ENCODE measurements at regions of chr10 and their contacts with region 1.

Region 1: DNA sequence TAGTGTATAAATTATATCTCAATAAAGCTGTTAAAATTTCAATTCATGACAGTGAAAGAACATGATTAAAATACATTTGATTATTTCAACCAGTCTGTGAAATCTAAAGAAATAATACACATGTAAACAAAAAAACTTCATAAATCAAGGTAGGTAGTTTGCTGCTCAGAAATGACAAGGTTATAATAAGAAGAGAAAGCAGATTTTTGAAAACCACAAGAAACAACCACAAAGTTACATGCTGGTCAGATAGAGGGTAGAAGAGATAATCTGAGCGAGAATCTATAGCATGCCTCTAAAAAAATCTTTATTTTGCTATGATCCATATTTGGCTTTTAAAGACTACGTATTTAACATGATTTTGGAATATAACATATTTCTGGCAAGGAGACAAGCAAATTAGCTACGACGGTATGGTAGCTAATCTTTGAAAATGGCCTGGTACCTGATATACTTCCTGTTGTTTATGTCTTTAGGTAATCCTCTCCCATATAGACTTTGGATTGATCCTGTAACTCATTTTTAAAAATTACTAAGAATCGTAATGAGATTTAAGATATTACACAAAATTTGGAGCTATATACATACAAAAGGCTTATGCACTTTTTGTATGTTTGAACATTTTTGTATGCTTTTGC is 23.5 kb upstream of the VCL start:
- DNase-seq: peak in 3 of 9 donors; percentile 11 to 33 (median 19)
- ATAC-seq: peak; percentile 54
- H3K4me3 ChIP-seq: no peak overlapping the region
- H3K4me3 Mint-ChIP-seq: peak overlapping the region in 9 of 10 donors; percentile 16 to 78 (median 61)
- H3K27ac ChIP-seq: no peak overlapping the region
- H3K27ac Mint-ChIP-seq: peak overlapping the region in 7 of 9 donors; percentile 13 to 77 (median 37)
- H3K4me1 ChIP-seq: peaks cover 13 to 16% of the 10 kb centered on the region in 2 donors
- H3K4me1 Mint-ChIP-seq: peaks cover 0 to 27% (median 22%) of the 10 kb centered on the region in 7 donors
- H3K27me3 ChIP-seq: no peaks in the 10 kb centered on the region
- H3K27me3 Mint-ChIP-seq: peaks cover 0 to 16% (median 0%) of the 10 kb centered on the region in 5 donors

Region 2: DNA sequence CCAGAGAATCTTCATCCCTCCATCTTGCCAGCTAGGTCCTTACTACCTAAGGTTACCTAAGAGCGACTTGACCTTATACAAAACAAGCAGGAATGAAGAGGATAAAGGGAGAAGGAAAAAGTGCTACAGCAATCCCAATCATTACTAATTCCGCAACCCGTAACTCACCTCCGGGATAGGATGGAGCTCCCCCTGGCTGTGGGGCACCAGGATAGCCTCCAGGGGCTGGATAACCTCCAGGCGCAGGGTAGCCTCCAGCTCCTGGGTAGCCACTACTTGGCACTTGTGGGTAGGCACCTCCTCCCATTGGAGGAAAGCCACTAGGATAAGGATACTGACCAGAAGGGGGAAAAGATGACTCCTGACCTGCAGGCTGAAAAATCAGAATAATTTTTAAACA is 576.4 kb before region 1 on chr10:
- CTCF ChIA-PET with region 1: no interaction called
- POLR2A ChIA-PET with region 1: no interaction called
- intact Hi-C with region 1: no loop called
- DNase-seq: no peak
- ATAC-seq: no peak
- H3K4me3 ChIP-seq: no peak overlapping the region
- H3K4me3 Mint-ChIP-seq: no peak overlapping the region
- H3K27ac ChIP-seq: no peak overlapping the region
- H3K27ac Mint-ChIP-seq: no peak overlapping the region
- H3K4me1 ChIP-seq: no peaks in the 10 kb centered on the region
- H3K4me1 Mint-ChIP-seq: peaks cover 2 to 19% (median 9%) of the 10 kb centered on the region in 7 donors
- H3K27me3 ChIP-seq: no peaks in the 10 kb centered on the region
- H3K27me3 Mint-ChIP-seq: no peaks in the 10 kb centered on the region

Region 3: GRCh38 chr10:73991884-73992245 is 17.4 kb after region 1 on chr10:
- CTCF ChIA-PET with region 1: interaction called, 3 read pairs
- POLR2A ChIA-PET with region 1: interaction called, 10 read pairs
- intact Hi-C with region 1: loop called in 1 of 2 experiments (anchors 1 kb)
- DNase-seq: peak; percentile 31 to 87 (median 79)
- ATAC-seq: peak; percentile 100
- H3K4me3 ChIP-seq: no peak overlapping the region
- H3K4me3 Mint-ChIP-seq: peak overlapping the region; percentile 1 to 72 (median 60)
- H3K27ac ChIP-seq: no peak overlapping the region
- H3K27ac Mint-ChIP-seq: peak overlapping the region; percentile 11 to 88 (median 82)
- H3K4me1 ChIP-seq: peaks cover 20 to 21% of the 10 kb centered on the region in 2 donors
- H3K4me1 Mint-ChIP-seq: peaks cover 26 to 59% (median 42%) of the 10 kb centered on the region in 7 donors
- H3K27me3 ChIP-seq: no peaks in the 10 kb centered on the region
- H3K27me3 Mint-ChIP-seq: no peaks in the 10 kb centered on the region